GM18951 (cell line): ENCODE measurements at regions of chr5 and their contacts with region 1.

Region 1: GRCh38 chr5:119411935-119412602 is 40.2 kb upstream of the HSD17B4 start:
- POLR2A ChIP-seq: no peak

Region 2: GRCh38 chr5:118987988-118988865 is 423.8 kb before region 1 on chr5 and contains the start of gene DTWD2:
- in situ Hi-C with region 1: loop called (anchors 10 kb)
- POLR2A ChIP-seq: peak; percentile 74

Region 3: GRCh38 chr5:119022017-119022745 is 389.9 kb before region 1 on chr5:
- in situ Hi-C with region 1: loop called (anchors 10 kb)
- POLR2A ChIP-seq: no peak

Region 4: GRCh38 chr5:119153629-119154028 is 258.4 kb before region 1 on chr5:
- in situ Hi-C with region 1: no loop called
- POLR2A ChIP-seq: no peak

Region 5: GRCh38 chr5:119238265-119239118 is 173.6 kb before region 1 on chr5:
- in situ Hi-C with region 1: no loop called
- POLR2A ChIP-seq: no peak

Region 6: DNA sequence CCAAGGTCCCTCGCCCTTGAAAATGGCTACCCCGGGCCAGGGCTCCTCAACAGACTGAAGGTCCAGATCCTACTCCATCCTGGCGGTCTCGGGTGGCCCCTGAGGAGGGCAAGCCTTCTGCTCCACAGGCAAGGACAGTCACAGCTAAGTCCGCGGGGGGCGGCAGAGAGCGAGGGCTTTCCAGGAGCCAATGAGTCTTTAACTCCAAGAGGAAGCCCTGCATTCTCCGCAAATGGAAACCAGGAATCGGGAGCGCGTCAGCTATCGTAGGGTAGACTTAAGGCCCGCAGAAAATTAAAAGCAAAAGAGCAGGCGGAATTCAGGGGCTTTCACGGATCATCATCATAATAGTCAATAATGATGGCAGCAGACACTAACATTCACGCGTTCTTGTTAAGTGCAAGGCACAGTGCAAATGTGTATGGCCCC is 144.1 kb before region 1 on chr5:
- in situ Hi-C with region 1: loop called (anchors 10 kb)
- POLR2A ChIP-seq: no peak

Region 7: DNA sequence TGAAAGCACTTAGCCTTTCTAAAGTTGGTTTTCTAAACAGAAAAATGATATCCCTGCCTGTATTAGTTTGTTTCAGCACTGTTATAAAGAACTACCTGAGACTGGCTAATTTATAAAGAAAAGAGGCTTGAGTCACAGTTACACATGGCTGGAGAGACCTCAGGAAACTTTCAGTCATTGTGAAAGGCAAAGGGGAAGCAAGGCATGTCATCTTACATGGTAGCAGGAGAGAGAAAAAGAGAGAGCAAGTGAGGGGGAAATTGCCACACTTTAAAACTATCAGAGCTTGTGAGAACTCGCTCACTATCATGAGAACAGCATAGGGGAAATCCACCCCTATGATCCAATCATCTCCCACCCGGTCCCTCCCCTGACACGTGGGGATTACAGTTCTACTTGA is 282.2 kb after region 1 on chr5:
- in situ Hi-C with region 1: no loop called
- POLR2A ChIP-seq: no peak